Activated B cell treated with CpG ODN at 0.5 μM for 24 hours (primary cell): ENCODE measurements at regions of chr3 and their contacts with region 1.

Region 1: GRCh38 chr3:188309437-188310269 is 155.7 kb downstream of the LPP start:
- DNase-seq: no peak
- ATAC-seq: peak; percentile 78
- H3K4me3 Mint-ChIP-seq: peak overlapping the region; percentile 72
- H3K27ac Mint-ChIP-seq: peak overlapping the region; percentile 91
- H3K4me1 Mint-ChIP-seq: peaks cover 39% of the 10 kb centered on the region
- H3K27me3 Mint-ChIP-seq: no peaks in the 10 kb centered on the region
- CTCF ChIP-seq: no peak

Region 2: DNA sequence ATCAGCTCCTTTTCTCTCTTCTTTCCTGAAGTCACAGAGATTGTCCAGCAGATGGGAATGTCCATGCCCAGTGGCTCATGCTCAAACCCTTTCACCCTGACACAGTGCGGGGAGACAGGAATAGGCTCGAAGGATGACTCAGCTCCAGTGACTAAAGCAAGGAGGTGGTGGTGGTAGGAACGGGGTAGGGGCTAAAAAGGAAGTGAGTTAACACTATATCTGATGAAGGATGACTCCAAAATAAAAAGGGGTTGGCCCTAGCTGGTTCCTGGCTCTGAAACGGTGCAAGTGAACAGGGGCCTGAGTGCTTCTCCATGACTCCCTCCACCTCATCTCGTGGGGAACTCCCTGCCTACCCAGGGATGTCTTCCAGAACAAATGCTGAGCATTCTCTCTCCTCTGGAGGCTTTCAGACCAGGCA is 323.1 kb before region 1 on chr3:
- CTCF ChIA-PET with region 1: no interaction called
- POLR2A ChIA-PET with region 1: no interaction called
- intact Hi-C with region 1: loop called (anchors 5 kb)
- DNase-seq: no peak
- ATAC-seq: peak; percentile 52
- H3K4me3 Mint-ChIP-seq: no peak overlapping the region
- H3K27ac Mint-ChIP-seq: no peak overlapping the region
- H3K4me1 Mint-ChIP-seq: peaks cover 20% of the 10 kb centered on the region
- H3K27me3 Mint-ChIP-seq: peaks cover 15% of the 10 kb centered on the region
- CTCF ChIP-seq: no peak

Region 3: GRCh38 chr3:188326111-188326510 is 16.5 kb after region 1 on chr3:
- CTCF ChIA-PET with region 1: interaction called, 3 read pairs
- POLR2A ChIA-PET with region 1: no interaction called
- intact Hi-C with region 1: loop called (anchors 2 kb)
- DNase-seq: no peak
- ATAC-seq: no peak
- H3K4me3 Mint-ChIP-seq: no peak overlapping the region
- H3K27ac Mint-ChIP-seq: no peak overlapping the region
- H3K4me1 Mint-ChIP-seq: peaks cover 58% of the 10 kb centered on the region
- H3K27me3 Mint-ChIP-seq: no peaks in the 10 kb centered on the region
- CTCF ChIP-seq: no peak

Region 4: GRCh38 chr3:188400494-188401243 is 91.0 kb after region 1 on chr3:
- CTCF ChIA-PET with region 1: no interaction called
- POLR2A ChIA-PET with region 1: interaction called, 9 read pairs
- intact Hi-C with region 1: loop called (anchors 5 kb)
- DNase-seq: no peak
- ATAC-seq: peak; percentile 82
- H3K4me3 Mint-ChIP-seq: peak overlapping the region; percentile 56
- H3K27ac Mint-ChIP-seq: peak overlapping the region; percentile 91
- H3K4me1 Mint-ChIP-seq: peaks cover 93% of the 10 kb centered on the region
- H3K27me3 Mint-ChIP-seq: no peaks in the 10 kb centered on the region
- CTCF ChIP-seq: no peak

Region 5: GRCh38 chr3:188432802-188433520 is 123.3 kb after region 1 on chr3:
- CTCF ChIA-PET with region 1: interaction called, 3 read pairs
- POLR2A ChIA-PET with region 1: interaction called, 3 read pairs
- intact Hi-C with region 1: loop called (anchors 5 kb)
- DNase-seq: no peak
- ATAC-seq: peak; percentile 90
- H3K4me3 Mint-ChIP-seq: peak overlapping the region; percentile 80
- H3K27ac Mint-ChIP-seq: peak overlapping the region; percentile 100
- H3K4me1 Mint-ChIP-seq: peaks cover 91% of the 10 kb centered on the region
- H3K27me3 Mint-ChIP-seq: no peaks in the 10 kb centered on the region
- CTCF ChIP-seq: no peak